ENCODE measurements at regions of chr7 and their contacts with region 1.

Region 1: GRCh38 chr7:150502519-150502918 is 12.2 kb upstream of the GIMAP7 start:
- DNase-seq: no peak
- H3K4me3 Mint-ChIP-seq: peak overlapping the region; percentile 60
- H3K27ac Mint-ChIP-seq: peak overlapping the region; percentile 96
- H3K4me1 Mint-ChIP-seq: peaks cover 85% of the 10 kb centered on the region
- H3K27me3 Mint-ChIP-seq: no peaks in the 10 kb centered on the region

Region 2: GRCh38 chr7:150466477-150466876 is 36.0 kb before region 1 on chr7:
- intact Hi-C with region 1: no loop called
- DNase-seq: no peak
- H3K4me3 Mint-ChIP-seq: no peak overlapping the region
- H3K27ac Mint-ChIP-seq: no peak overlapping the region
- H3K4me1 Mint-ChIP-seq: peaks cover 74% of the 10 kb centered on the region
- H3K27me3 Mint-ChIP-seq: no peaks in the 10 kb centered on the region

Region 3: GRCh38 chr7:150520145-150520544 is 17.6 kb after region 1 on chr7:
- intact Hi-C with region 1: loop called (anchors 2 kb)
- DNase-seq: peak; percentile 43
- H3K4me3 Mint-ChIP-seq: peak overlapping the region; percentile 96
- H3K27ac Mint-ChIP-seq: peak overlapping the region; percentile 93
- H3K4me1 Mint-ChIP-seq: peaks cover 65% of the 10 kb centered on the region
- H3K27me3 Mint-ChIP-seq: no peaks in the 10 kb centered on the region

Measured in activated T-helper 1 cell treated with anti-CD3 and anti-CD28 coated beads, Interleukin-12 subunit alpha, Interleukin-12 subunit beta, Interleukin-2, Interleukin-4 antibody, amounts not matched to agents 30 ng/mL and 10 ng/mL and 1 ng/mL, durations not matched to agents 14 hours and 24 hours and 36 hours (primary cell).